ENCODE measurements at regions of chr1 and their contacts with region 1.

Region 1: GRCh38 chr1:14778898-14779865 is 180.7 kb downstream of the KAZN start:
- DNase-seq: peak in 1 of 5 donors; percentile 22
- ATAC-seq: no peak
- H3K4me3 ChIP-seq: no peak overlapping the region
- H3K27ac ChIP-seq: no peak overlapping the region
- H3K4me1 ChIP-seq: no peaks in the 10 kb centered on the region
- H3K27me3 ChIP-seq: peaks cover 0 to 2% (median 0%) of the 10 kb centered on the region in 9 donors
- CTCF ChIP-seq: peak; percentile 48 to 73 (median 64)
- POLR2A ChIP-seq: no peak

Region 2: DNA sequence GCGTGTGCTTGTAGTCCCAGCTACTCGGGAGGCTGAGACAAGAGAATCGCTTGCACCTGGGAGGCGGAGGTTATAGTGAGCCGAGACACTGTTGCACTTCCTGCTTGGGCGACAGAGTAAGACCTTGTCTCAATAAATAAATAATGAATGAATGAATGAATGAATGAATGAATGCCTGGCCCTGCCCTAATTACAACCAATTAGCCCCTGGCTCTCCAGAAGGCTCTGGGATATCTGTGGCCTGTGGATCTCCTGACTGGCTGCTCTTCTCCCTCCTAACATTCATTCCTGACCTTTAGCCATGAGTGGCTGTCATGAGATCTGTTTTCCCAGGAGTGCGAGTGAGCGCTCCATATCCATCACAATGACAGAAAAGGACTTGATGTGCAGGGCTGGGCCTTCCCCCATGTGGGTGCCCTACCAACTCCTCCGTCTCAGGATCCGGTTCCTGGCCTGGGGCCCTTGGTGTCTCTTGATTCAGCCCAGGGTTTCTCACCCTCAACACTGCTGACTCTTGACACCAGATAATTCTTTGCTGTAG is 130.8 kb after region 1 on chr1:
- intact Hi-C with region 1: loop called in 2 of 10 experiments (anchors 10 kb)
- DNase-seq: peak in 1 of 5 donors; percentile 19
- ATAC-seq: peak in 3 of 4 donors; percentile 47 to 70 (median 61)
- H3K4me3 ChIP-seq: no peak overlapping the region
- H3K27ac ChIP-seq: no peak overlapping the region
- H3K4me1 ChIP-seq: peaks cover 0 to 8% (median 0%) of the 10 kb centered on the region in 12 donors
- H3K27me3 ChIP-seq: no peaks in the 10 kb centered on the region
- CTCF ChIP-seq: no peak
- POLR2A ChIP-seq: no peak

Region 3: DNA sequence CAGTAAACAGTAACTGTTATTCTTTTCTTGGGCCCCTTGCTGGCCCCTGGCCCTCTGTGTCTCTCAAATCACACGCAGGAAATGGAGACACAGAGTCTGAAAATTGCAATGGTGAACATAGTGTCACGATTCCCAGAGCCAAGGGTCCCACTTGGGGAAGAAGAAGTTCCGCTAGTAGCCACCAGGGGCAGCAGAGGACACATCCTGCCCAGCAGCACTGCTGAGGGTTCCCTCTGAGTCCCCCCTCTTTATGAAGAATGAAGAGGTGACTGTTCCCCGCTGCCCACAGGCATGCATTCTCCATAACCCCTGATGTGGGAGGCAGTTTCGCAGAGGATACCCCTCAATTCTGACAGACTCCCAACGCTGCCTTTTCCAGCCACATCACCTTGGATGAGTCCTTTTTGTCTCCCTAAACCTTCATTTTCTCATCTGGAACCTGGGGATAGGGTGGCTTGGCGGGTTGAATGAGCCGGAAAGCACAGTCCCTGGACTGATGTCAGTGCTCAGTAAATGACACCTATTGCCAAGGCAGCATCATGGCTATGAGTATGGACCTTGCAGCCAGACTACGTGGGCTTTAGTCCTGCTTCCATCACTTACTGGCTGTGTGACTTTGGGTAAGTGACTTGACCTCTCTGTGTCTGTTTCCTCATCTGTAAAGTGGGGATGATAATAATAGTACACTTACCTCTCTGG is 136.3 kb after region 1 on chr1:
- intact Hi-C with region 1: loop called in 1 of 10 experiments (anchors 10 kb)
- DNase-seq: peak in 4 of 5 donors; percentile 27 to 53 (median 43)
- ATAC-seq: peak in 3 of 4 donors; percentile 48 to 62 (median 59)
- H3K4me3 ChIP-seq: no peak overlapping the region
- H3K27ac ChIP-seq: no peak overlapping the region
- H3K4me1 ChIP-seq: peaks cover 0 to 2% (median 0%) of the 10 kb centered on the region in 12 donors
- H3K27me3 ChIP-seq: no peaks in the 10 kb centered on the region
- CTCF ChIP-seq: peak; percentile 80 to 93 (median 90)
- POLR2A ChIP-seq: no peak

Measured in heart left ventricle (tissue), 16 donors.